ENCODE measurements at regions of chr3 and their contacts with region 1.

Region 1: DNA sequence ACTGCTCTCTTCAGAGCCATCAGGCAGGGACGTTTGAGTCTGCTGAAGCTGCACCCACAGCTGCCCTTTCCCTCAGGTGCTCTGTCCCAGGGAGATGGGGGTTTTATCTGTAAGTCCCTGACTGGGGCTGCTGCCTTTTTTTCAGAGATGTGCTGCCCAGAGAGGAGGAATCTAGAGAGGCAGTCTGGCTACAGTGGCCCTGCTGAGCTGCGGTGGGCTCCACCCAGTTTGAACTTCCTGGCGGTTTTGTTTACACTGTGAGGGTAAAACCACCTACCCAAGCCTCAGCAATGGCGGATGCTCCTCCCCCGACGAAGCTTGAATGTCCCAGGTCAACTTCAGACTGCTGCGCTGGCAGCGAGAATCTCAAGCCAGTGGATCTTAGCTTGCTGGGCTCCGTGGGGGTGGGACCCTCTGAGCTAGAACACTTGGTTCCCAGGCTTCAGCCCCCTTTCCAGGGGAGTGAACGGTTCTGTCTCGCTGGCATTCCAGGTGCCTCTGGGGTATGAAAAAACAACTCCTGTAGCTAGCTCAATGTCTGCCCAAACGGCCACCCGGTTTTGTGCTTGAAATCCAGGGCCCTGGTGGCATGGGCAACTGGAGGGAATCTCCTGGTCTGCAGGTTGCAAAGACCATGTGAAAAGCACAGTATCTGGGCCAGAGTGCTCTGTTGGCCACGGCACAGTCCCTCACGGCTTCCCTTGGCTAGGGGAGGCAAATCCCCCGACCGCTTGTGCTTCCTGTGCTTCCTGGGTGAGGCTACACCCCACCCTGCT is 21.1 kb upstream of the ST6GAL1 start:
- DNase-seq: peak; percentile 84 to 89 (median 87)
- H3K4me3 ChIP-seq: peak overlapping the region; percentile 50 to 66
- H3K4me3 Mint-ChIP-seq: peak overlapping the region; percentile 58 to 86 (median 77)
- H3K27ac ChIP-seq: peak overlapping the region; percentile 58
- H3K27ac Mint-ChIP-seq: peak overlapping the region; percentile 91 to 95 (median 94)
- H3K4me1 ChIP-seq: peaks cover 32% of the 10 kb centered on the region
- H3K4me1 Mint-ChIP-seq: peaks cover 22 to 52% (median 38%) of the 10 kb centered on the region in 4 donors
- H3K27me3 ChIP-seq: no peaks in the 10 kb centered on the region
- H3K27me3 Mint-ChIP-seq: no peaks in the 10 kb centered on the region

Region 2: GRCh38 chr3:186520957-186521842 is 388.1 kb before region 1 on chr3:
- CTCF ChIA-PET with region 1: no interaction called
- POLR2A ChIA-PET with region 1: no interaction called
- intact Hi-C with region 1: no loop called
- DNase-seq: no peak
- H3K4me3 ChIP-seq: no peak overlapping the region
- H3K4me3 Mint-ChIP-seq: peak overlapping the region in 2 of 8 donors; percentile 29 to 53
- H3K27ac ChIP-seq: no peak overlapping the region
- H3K27ac Mint-ChIP-seq: peak overlapping the region; percentile 16 to 96 (median 57)
- H3K4me1 ChIP-seq: peaks cover 57% of the 10 kb centered on the region
- H3K4me1 Mint-ChIP-seq: peaks cover 35 to 63% (median 49%) of the 10 kb centered on the region in 4 donors
- H3K27me3 ChIP-seq: no peaks in the 10 kb centered on the region
- H3K27me3 Mint-ChIP-seq: no peaks in the 10 kb centered on the region

Region 3: GRCh38 chr3:186798239-186798874 is 110.9 kb before region 1 on chr3:
- CTCF ChIA-PET with region 1: no interaction called
- POLR2A ChIA-PET with region 1: no interaction called
- intact Hi-C with region 1: no loop called
- DNase-seq: no peak
- H3K4me3 ChIP-seq: no peak overlapping the region
- H3K4me3 Mint-ChIP-seq: no peak overlapping the region
- H3K27ac ChIP-seq: no peak overlapping the region
- H3K27ac Mint-ChIP-seq: peak overlapping the region in 4 of 7 donors; percentile 2 to 19 (median 7)
- H3K4me1 ChIP-seq: peaks cover 27% of the 10 kb centered on the region
- H3K4me1 Mint-ChIP-seq: peaks cover 11 to 20% (median 15%) of the 10 kb centered on the region in 4 donors
- H3K27me3 ChIP-seq: no peaks in the 10 kb centered on the region
- H3K27me3 Mint-ChIP-seq: no peaks in the 10 kb centered on the region

Region 4: GRCh38 chr3:186882881-186883685 is 26.2 kb before region 1 on chr3:
- CTCF ChIA-PET with region 1: interaction called, 3 read pairs
- POLR2A ChIA-PET with region 1: interaction called, 16 read pairs
- intact Hi-C with region 1: no loop called
- DNase-seq: no peak
- H3K4me3 ChIP-seq: no peak overlapping the region
- H3K4me3 Mint-ChIP-seq: peak overlapping the region in 6 of 8 donors; percentile 17 to 77 (median 39)
- H3K27ac ChIP-seq: no peak overlapping the region
- H3K27ac Mint-ChIP-seq: peak overlapping the region in 5 of 7 donors; percentile 11 to 26 (median 17)
- H3K4me1 ChIP-seq: peaks cover 45% of the 10 kb centered on the region
- H3K4me1 Mint-ChIP-seq: peaks cover 30 to 55% (median 40%) of the 10 kb centered on the region in 4 donors
- H3K27me3 ChIP-seq: no peaks in the 10 kb centered on the region
- H3K27me3 Mint-ChIP-seq: no peaks in the 10 kb centered on the region

Region 5: GRCh38 chr3:186921578-186921977 is 12.3 kb after region 1 on chr3:
- CTCF ChIA-PET with region 1: interaction called, 5 read pairs
- POLR2A ChIA-PET with region 1: interaction called, 11 read pairs
- intact Hi-C with region 1: no loop called
- DNase-seq: no peak
- H3K4me3 ChIP-seq: no peak overlapping the region
- H3K4me3 Mint-ChIP-seq: no peak overlapping the region
- H3K27ac ChIP-seq: no peak overlapping the region
- H3K27ac Mint-ChIP-seq: no peak overlapping the region
- H3K4me1 ChIP-seq: peaks cover 11% of the 10 kb centered on the region
- H3K4me1 Mint-ChIP-seq: peaks cover 6 to 21% (median 8%) of the 10 kb centered on the region in 4 donors
- H3K27me3 ChIP-seq: no peaks in the 10 kb centered on the region
- H3K27me3 Mint-ChIP-seq: no peaks in the 10 kb centered on the region

Measured in CD4-positive, alpha-beta memory T cell (primary cell).